ENCODE measurements at regions of chr10 and their contacts with region 1.

Region 1: GRCh38 chr10:113385021-113385999 is 167.5 kb upstream of the HABP2 start:
- DNase-seq: peak; percentile 83
- H3K4me3 Mint-ChIP-seq: no peak overlapping the region
- H3K27ac Mint-ChIP-seq: no peak overlapping the region
- H3K4me1 Mint-ChIP-seq: peaks cover 20% of the 10 kb centered on the region
- H3K27me3 Mint-ChIP-seq: peaks cover 32% of the 10 kb centered on the region
- CTCF ChIP-seq: peak; percentile 91

Region 2: GRCh38 chr10:112471878-112472487 is 913.3 kb before region 1 on chr10:
- CTCF ChIA-PET with region 1: interaction called, 34 read pairs
- POLR2A ChIA-PET with region 1: no interaction called
- intact Hi-C with region 1: loop called (anchors 1 kb)
- DNase-seq: peak; percentile 64
- H3K4me3 Mint-ChIP-seq: no peak overlapping the region
- H3K27ac Mint-ChIP-seq: no peak overlapping the region
- H3K4me1 Mint-ChIP-seq: no peaks in the 10 kb centered on the region
- H3K27me3 Mint-ChIP-seq: no peaks in the 10 kb centered on the region
- CTCF ChIP-seq: peak; percentile 56

Region 3: GRCh38 chr10:112565434-112566053 is 819.8 kb before region 1 on chr10:
- CTCF ChIA-PET with region 1: interaction called, 8 read pairs
- POLR2A ChIA-PET with region 1: no interaction called
- intact Hi-C with region 1: loop called (anchors 2 kb)
- DNase-seq: peak; percentile 78
- H3K4me3 Mint-ChIP-seq: no peak overlapping the region
- H3K27ac Mint-ChIP-seq: no peak overlapping the region
- H3K4me1 Mint-ChIP-seq: no peaks in the 10 kb centered on the region
- H3K27me3 Mint-ChIP-seq: no peaks in the 10 kb centered on the region
- CTCF ChIP-seq: peak; percentile 80

Region 4: DNA sequence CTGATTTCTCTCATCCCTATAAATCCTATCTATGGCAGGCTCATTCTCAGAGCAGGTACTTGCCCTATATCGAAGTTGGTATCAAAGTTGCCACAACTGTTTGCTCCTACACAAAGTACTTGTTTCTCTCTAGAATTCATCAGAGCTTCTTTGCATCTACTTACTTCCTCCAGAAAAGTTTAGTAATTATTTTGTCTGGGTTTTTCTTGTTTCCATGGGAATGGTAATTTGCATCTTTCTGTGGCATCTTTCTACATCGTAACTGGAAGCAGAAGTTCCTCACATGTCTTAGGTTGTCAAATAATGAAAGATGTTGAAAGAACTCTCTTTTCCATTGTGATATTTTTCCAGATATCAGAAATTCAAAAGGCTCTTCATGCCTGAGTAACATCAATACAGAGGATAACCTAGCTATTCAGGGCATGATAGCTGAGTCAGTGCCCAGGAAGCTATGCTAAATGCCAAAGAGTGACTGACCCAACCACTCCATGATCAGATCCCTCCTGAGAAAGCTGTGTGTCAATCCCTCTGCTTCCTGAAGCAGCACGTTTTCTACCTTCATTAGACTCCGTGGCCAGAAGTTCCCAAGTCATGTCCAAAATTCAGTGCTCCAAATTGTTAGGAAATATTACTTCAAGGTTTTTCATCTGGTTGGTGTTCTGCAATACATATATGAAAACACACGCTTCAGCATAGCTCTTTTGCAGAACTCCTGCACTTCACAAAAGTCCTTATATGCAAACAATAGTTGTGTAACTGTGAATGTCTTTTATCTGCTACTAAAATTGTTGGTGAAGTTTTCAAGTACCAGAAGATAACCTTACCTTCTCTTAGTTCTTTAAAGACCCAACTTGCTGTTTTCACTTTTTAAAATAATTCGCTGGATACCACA is 721.8 kb before region 1 on chr10:
- CTCF ChIA-PET with region 1: no interaction called
- POLR2A ChIA-PET with region 1: no interaction called
- intact Hi-C with region 1: no loop called
- DNase-seq: peak; percentile 52
- H3K4me3 Mint-ChIP-seq: no peak overlapping the region
- H3K27ac Mint-ChIP-seq: peak overlapping the region; percentile 33
- H3K4me1 Mint-ChIP-seq: peaks cover 21% of the 10 kb centered on the region
- H3K27me3 Mint-ChIP-seq: no peaks in the 10 kb centered on the region
- CTCF ChIP-seq: no peak

Region 5: DNA sequence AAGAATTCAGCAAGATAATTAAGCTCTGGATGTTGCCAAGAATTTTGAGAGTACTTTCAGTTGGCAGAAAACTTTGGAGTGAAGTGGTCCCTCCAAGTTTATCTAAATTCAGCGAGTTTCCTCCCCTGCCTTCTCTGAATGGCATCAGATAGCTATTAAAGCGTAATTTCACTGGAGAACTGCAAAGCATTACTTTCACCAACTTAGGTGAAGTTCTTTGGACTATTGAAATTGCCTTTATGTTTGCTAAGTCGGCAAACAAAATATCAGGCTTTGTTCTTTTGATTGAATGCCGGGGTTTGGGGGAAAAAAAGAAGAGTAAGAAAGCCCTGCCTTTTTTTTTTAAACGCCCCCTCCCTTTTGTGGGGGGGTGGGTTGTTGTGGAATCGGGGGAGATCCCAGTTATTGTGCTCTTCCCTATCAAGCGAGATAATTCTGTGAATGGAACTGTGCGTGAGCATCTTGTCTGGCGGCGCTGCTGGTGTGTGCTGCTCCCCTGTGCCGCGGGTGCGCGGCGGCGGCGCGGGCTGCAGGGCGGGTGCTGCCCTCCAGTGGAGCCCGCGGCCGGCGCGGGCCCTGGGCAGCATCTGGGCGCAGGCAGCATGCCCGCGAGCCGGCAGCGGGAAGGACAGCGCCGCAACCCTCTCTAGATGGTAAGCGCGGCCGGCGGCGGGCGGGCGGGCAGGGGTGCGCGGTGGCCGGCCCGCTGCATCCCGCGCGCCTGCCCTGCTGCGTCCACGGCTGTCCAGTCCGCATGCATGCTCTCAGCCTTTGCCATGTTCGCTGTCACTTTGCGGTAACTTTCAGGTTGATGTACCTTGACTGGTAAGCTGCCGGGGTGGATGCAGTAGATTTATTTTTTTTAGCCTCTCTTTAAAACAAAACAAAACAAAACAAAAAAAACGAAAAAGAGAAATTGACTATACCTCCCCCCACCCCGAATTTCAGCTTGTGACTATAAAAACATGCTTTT is 258.8 kb before region 1 on chr10:
- CTCF ChIA-PET with region 1: interaction called, 21 read pairs
- POLR2A ChIA-PET with region 1: no interaction called
- intact Hi-C with region 1: loop called (anchors 1 kb)
- DNase-seq: peak; percentile 71
- H3K4me3 Mint-ChIP-seq: peak overlapping the region; percentile 59
- H3K27ac Mint-ChIP-seq: no peak overlapping the region
- H3K4me1 Mint-ChIP-seq: peaks cover 7% of the 10 kb centered on the region
- H3K27me3 Mint-ChIP-seq: no peaks in the 10 kb centered on the region
- CTCF ChIP-seq: peak; percentile 78

Region 6: GRCh38 chr10:113216102-113216501 is 169.2 kb before region 1 on chr10:
- CTCF ChIA-PET with region 1: interaction called, 30 read pairs
- POLR2A ChIA-PET with region 1: interaction called, 5 read pairs
- intact Hi-C with region 1: loop called (anchors 1 kb)
- DNase-seq: peak; percentile 14
- H3K4me3 Mint-ChIP-seq: no peak overlapping the region
- H3K27ac Mint-ChIP-seq: no peak overlapping the region
- H3K4me1 Mint-ChIP-seq: no peaks in the 10 kb centered on the region
- H3K27me3 Mint-ChIP-seq: peaks cover 12% of the 10 kb centered on the region
- CTCF ChIP-seq: no peak

Region 7: DNA sequence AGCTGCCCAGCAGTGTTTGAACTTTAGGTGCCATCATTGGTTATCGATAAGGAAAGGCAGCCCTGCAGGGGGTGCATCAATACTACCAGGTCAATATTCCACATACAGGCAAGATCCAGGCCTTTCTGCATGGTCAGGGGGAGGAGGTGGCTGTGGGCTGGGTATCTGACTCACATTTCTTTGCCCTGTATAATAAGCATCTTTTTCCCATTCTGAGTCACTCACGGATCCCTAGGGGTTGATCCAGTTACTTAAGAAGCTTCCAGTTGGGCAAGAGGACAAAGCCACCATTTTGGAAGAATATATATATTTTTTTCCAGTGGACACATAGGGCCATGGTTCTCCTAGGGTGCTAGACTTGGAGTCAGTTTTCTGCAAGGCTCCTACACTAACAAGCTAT is 53.3 kb after region 1 on chr10:
- CTCF ChIA-PET with region 1: no interaction called
- POLR2A ChIA-PET with region 1: no interaction called
- intact Hi-C with region 1: no loop called
- DNase-seq: peak; percentile 25
- H3K4me3 Mint-ChIP-seq: no peak overlapping the region
- H3K27ac Mint-ChIP-seq: no peak overlapping the region
- H3K4me1 Mint-ChIP-seq: no peaks in the 10 kb centered on the region
- H3K27me3 Mint-ChIP-seq: peaks cover 34% of the 10 kb centered on the region
- CTCF ChIP-seq: no peak

Region 8: DNA sequence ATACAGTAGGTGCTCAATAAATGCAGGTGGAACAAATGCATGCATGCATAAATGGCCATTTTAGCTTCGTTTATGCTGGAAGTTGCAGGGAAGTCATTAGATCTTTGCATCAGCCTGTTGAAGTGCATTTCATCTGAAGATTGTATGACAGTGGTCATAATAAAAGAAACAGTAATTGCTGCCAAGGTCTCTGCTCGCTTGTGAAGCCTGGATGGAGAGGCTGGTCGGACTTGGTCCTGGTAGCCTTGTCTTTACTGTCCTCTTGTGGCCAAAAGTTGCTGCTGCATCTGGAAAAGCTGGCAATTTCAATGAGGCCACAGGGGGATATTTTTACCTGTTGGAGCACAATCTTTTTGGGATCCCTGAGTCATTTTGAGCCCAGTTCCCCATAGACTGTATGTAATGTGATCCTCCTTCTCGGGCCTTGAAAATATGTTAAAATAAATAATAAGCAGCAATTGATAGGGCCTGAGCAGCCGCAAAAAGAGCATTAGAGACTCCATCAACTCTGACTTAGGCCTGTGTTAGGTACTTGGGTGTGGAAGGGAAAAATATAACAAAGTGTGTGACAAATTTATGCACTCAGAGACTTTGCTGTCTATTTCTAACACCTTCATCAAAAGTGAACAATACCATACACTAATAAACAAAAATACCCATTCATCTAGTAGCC is 135.9 kb after region 1 on chr10:
- CTCF ChIA-PET with region 1: interaction called, 8 read pairs
- POLR2A ChIA-PET with region 1: no interaction called
- intact Hi-C with region 1: loop called (anchors 1 kb)
- DNase-seq: peak; percentile 69
- H3K4me3 Mint-ChIP-seq: no peak overlapping the region
- H3K27ac Mint-ChIP-seq: no peak overlapping the region
- H3K4me1 Mint-ChIP-seq: no peaks in the 10 kb centered on the region
- H3K27me3 Mint-ChIP-seq: peaks cover 35% of the 10 kb centered on the region
- CTCF ChIP-seq: peak; percentile 96